Body of pancreas (tissue), 4 donors: ENCODE measurements at regions of chr5 and their contacts with region 1.

Region 1: GRCh38 chr5:36944607-36945225 is 68.1 kb downstream of the NIPBL start:
- DNase-seq: no peak
- ATAC-seq: no peak
- H3K4me3 ChIP-seq: no peak overlapping the region
- H3K27ac ChIP-seq: no peak overlapping the region
- H3K4me1 ChIP-seq: peaks cover 23% of the 10 kb centered on the region
- H3K27me3 ChIP-seq: no peaks in the 10 kb centered on the region
- CTCF ChIP-seq: peak in 6 of 7 experiments; percentile 44 to 74 (median 55)
- POLR2A ChIP-seq: no peak

Region 2: GRCh38 chr5:36728697-36729543 is 215.8 kb before region 1 on chr5:
- intact Hi-C with region 1: loop called (anchors 10 kb)
- DNase-seq: peak in 2 of 4 donors; percentile 18 to 39
- ATAC-seq: peak; percentile 74
- H3K4me3 ChIP-seq: no peak overlapping the region
- H3K27ac ChIP-seq: no peak overlapping the region
- H3K4me1 ChIP-seq: no peaks in the 10 kb centered on the region
- H3K27me3 ChIP-seq: no peaks in the 10 kb centered on the region
- CTCF ChIP-seq: peak in 6 of 7 experiments; percentile 54 to 87 (median 68)
- POLR2A ChIP-seq: no peak

Region 3: GRCh38 chr5:36875790-36876388 is 68.8 kb before region 1 on chr5:
- intact Hi-C with region 1: loop called (anchors 10 kb)
- DNase-seq: peak; percentile 75 to 87 (median 80)
- ATAC-seq: peak; percentile 75
- H3K4me3 ChIP-seq: peak overlapping the region; percentile 71 to 91
- H3K27ac ChIP-seq: peak overlapping the region; percentile 94 to 98 (median 96)
- H3K4me1 ChIP-seq: peaks cover 38% of the 10 kb centered on the region
- H3K27me3 ChIP-seq: no peaks in the 10 kb centered on the region
- CTCF ChIP-seq: peak; percentile 31 to 70 (median 52)
- POLR2A ChIP-seq: no peak